Transverse colon (tissue), 4 donors: ENCODE measurements at regions of chr7 and their contacts with region 1.

Region 1: DNA sequence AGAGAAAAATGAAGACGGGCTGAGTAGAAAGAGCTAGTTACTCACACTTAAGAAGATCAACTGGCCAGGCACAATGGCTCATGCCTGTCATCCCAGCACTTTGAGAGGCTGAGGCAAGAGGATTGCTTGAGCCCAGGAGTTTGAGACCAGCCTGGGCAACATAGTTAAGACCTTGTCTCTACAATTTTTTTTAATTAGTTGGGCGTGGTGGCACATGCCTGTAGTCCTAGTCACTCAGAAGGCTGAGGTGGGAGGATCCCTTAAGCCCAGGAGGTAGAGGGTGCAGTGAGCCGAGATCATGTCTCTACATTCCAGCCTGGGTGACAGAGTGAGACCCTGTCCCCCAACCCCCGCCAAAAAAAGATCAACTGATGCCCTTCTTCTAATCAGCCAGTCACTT is 74.6 kb upstream of the ATP6V0A4 start:
- DNase-seq: no peak
- H3K4me3 ChIP-seq: no peak overlapping the region
- H3K27ac ChIP-seq: no peak overlapping the region
- H3K4me1 ChIP-seq: no peaks in the 10 kb centered on the region
- H3K27me3 ChIP-seq: no peaks in the 10 kb centered on the region
- CTCF ChIP-seq: no peak
- EP300 ChIP-seq: no peak
- POLR2A ChIP-seq: no peak

Region 2: DNA sequence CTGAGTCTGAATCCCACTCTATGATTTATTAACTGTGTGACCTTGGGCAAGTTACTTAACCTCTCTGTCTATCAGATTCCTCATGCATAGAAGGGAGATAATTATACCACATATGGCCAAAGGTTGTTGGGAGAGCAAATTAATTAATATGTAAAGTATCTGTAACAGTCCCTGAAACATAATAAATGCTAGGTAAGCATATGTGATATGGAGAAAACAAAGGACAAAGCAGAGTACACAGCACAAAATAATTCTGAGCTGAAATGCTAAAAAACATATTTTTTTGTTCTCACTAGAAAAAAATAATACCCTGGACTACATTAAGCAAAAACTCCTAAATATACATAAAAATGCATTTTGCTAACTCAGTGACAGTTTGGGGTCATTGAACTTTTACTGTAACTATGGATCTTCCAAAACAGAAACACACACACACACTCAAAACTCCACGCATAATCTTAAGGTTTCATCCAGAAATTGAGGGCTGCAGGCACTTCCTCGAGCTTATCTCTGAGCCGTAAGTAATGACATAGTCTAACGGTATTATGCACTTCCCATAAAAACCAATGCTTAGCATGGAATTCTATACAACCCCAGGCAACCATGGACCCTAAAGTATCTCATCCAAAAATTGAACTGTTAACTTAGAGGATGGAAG is 1327.4 kb before region 1 on chr7:
- in situ Hi-C with region 1: no loop called
- intact Hi-C with region 1: loop called (anchors 5 kb)
- DNase-seq: no peak
- H3K4me3 ChIP-seq: no peak overlapping the region
- H3K27ac ChIP-seq: no peak overlapping the region
- H3K4me1 ChIP-seq: no peaks in the 10 kb centered on the region
- H3K27me3 ChIP-seq: no peaks in the 10 kb centered on the region
- CTCF ChIP-seq: no peak
- EP300 ChIP-seq: no peak
- POLR2A ChIP-seq: no peak

Region 3: GRCh38 chr7:139016931-139017511 is 144.5 kb after region 1 on chr7:
- in situ Hi-C with region 1: no loop called
- intact Hi-C with region 1: no loop called
- DNase-seq: peak; percentile 63
- H3K4me3 ChIP-seq: no peak overlapping the region
- H3K27ac ChIP-seq: no peak overlapping the region
- H3K4me1 ChIP-seq: no peaks in the 10 kb centered on the region
- H3K27me3 ChIP-seq: no peaks in the 10 kb centered on the region
- CTCF ChIP-seq: peak; percentile 46 to 57 (median 53)
- EP300 ChIP-seq: no peak
- POLR2A ChIP-seq: no peak